Activated T-helper 1 cell treated with anti-CD3 and anti-CD28 coated beads, Interleukin-12 subunit alpha, Interleukin-12 subunit beta, Interleukin-2, Interleukin-4 antibody, amounts not matched to agents 30 ng/mL and 10 ng/mL and 1 ng/mL, durations not matched to agents 14 hours and 24 hours and 36 hours (primary cell): ENCODE measurements at regions of chr6 and their contacts with region 1.

Region 1: DNA sequence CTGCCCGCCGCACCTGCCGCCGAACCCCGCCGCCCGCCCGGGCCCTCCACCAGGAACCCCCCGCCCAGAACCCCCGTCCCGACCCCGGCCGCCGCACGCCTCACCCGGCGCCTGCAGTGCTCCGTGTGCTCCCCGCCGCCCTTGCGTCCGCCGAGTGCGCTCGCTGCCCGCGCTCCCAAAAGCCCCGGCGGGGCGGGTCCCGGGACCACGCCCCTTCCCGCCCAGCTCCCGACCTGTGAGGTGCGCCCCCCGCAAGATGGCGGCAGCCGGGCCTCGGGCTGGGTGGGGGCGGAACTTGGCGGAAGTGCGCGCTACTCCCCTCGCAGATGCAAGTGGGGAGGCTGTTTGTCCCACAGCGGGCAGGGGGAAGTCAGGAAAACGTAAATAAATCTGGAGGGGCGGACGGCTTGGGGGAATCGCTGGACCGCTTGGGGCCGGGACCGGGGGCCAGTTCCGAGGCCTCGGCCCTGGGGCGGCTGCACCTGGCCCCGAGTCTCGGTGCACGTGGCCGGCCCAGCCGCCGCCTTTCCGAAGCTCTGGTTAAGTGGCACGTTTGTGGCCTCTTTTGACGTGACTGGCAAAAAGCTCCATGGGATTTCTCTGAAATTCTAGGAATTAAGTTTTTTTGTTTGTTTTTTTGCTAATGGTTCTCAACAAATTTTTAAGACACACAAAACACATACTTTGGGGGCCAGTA is at the start of gene EZR:
- DNase-seq: peak; percentile 71
- H3K4me3 Mint-ChIP-seq: peak within 1 kb of the TSS; percentile 79
- H3K27ac Mint-ChIP-seq: peak within 1 kb of the TSS; percentile 86
- H3K4me1 Mint-ChIP-seq: peaks cover 55% of the 10 kb centered on the region
- H3K27me3 Mint-ChIP-seq: no peaks in the 10 kb centered on the region
- total RNA-seq, gene EZR: 205 and 206 TPM in 2 replicates

Region 2: GRCh38 chr6:158207422-158207788 is 612.0 kb before region 1 on chr6:
- intact Hi-C with region 1: loop called (anchors 1 kb)
- DNase-seq: peak; percentile 68
- H3K4me3 Mint-ChIP-seq: peak overlapping the region; percentile 56
- H3K27ac Mint-ChIP-seq: peak overlapping the region; percentile 96
- H3K4me1 Mint-ChIP-seq: peaks cover 63% of the 10 kb centered on the region
- H3K27me3 Mint-ChIP-seq: no peaks in the 10 kb centered on the region

Region 3: GRCh38 chr6:158595223-158595622 is 224.1 kb before region 1 on chr6:
- intact Hi-C with region 1: no loop called
- DNase-seq: no peak
- H3K4me3 Mint-ChIP-seq: no peak overlapping the region
- H3K27ac Mint-ChIP-seq: no peak overlapping the region
- H3K4me1 Mint-ChIP-seq: no peaks in the 10 kb centered on the region
- H3K27me3 Mint-ChIP-seq: no peaks in the 10 kb centered on the region

Region 4: GRCh38 chr6:158718461-158719046 is 100.8 kb before region 1 on chr6:
- intact Hi-C with region 1: loop called (anchors 5 kb)
- DNase-seq: no peak
- H3K4me3 Mint-ChIP-seq: no peak overlapping the region
- H3K27ac Mint-ChIP-seq: no peak overlapping the region
- H3K4me1 Mint-ChIP-seq: peaks cover 69% of the 10 kb centered on the region
- H3K27me3 Mint-ChIP-seq: peaks cover 2% of the 10 kb centered on the region

Region 5: DNA sequence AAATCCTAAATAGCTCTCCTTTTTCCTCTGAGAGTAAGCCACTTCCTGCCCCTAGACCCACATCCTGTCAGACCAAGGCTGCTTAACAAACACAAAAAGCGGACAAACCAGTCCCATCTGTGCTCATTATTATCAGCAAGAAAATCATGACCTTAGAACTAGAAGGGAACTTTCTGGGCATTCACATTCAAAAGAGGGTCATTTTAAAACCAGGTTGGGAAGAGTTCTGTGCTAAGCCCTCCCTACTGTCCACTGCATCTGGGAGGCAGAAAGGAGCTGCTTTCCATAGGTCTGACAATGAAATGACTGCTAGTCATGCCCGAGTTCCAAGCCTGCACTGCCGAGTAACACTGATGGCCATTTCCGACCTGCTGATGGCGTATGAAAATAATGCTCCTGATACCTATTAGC is 15.6 kb before region 1 on chr6:
- intact Hi-C with region 1: loop called (anchors 1 kb)
- DNase-seq: peak; percentile 38
- H3K4me3 Mint-ChIP-seq: peak overlapping the region; percentile 72
- H3K27ac Mint-ChIP-seq: peak overlapping the region; percentile 89
- H3K4me1 Mint-ChIP-seq: peaks cover 88% of the 10 kb centered on the region
- H3K27me3 Mint-ChIP-seq: no peaks in the 10 kb centered on the region

Region 6: DNA sequence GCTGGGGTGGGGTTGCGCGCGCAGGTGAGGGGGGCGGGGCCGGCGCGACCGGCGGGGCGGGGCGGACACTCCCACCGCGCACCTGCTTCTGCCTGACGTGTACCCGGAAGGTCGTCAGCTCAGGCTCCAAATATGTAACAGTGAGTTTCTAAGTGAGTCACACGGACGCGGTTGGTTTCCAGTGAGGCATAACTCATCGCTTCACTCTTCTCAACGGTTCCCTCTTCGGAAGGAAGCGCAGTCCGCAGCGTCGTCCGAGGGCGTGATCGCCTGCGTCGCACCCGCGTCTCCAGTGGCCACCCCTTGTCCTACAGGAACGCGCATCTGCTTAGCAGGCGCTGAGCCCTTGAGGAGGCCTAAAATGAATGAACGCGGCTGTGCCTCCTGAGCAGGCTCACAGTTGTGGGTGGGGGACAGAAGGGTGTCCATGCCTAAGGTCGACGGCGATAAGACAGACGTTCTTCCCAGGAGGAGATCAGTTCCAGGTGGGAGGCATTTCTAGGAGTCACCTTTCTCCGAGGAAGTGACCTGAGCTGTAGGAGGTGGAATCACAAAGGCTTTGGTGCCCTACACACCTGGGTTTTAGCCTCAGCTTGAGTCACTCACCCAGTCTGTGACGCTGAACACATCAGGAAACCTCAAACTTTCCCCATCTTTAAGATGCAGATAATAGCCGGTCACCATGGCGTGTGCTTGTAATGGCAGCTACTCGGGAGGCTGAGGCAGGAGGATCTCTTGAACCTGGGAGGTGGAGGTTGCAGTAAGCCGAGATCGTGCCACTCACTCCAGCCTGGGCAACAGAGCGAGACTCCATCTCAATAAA is 50.7 kb after region 1 on chr6:
- intact Hi-C with region 1: loop called (anchors 1 kb)
- DNase-seq: peak; percentile 94
- H3K4me3 Mint-ChIP-seq: peak overlapping the region; percentile 87
- H3K27ac Mint-ChIP-seq: peak overlapping the region; percentile 99
- H3K4me1 Mint-ChIP-seq: peaks cover 37% of the 10 kb centered on the region
- H3K27me3 Mint-ChIP-seq: peaks cover 5% of the 10 kb centered on the region

Region 7: DNA sequence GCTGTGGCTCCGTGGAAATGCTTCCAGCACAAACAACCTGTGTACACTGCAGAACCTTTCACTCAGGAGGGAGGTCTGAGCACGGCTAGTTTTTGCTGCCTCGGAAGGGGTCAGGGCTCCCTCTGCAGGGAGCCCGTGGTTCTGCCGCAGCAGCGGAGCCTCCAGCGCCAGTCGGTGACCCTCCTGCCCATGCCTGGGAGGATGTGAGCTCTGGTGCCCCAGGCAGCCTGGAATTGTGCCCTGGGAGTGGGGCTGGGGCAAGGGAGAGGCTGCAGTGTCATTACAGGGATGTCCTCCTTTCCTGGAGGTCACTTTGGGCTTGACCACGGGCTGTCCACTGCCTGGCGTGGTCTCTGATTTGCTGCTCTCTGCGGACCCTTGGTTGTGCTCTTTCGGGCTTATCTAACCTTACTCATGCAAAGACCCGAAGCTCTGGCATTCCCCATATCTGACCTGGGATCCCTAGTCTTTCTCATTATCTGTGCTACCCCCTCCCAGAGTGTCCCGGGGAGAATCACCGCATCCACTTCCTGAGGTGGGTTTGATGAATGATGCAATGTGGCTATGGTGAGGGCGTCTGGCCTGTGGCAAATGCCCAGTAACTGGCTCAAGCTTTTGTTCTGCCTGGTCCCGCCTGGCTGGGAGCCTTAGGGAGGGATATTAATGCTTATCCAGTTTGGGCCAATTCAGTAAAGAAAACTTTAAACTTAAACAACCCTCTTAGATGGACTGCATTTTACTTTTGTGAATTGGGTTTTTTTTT is 285.0 kb after region 1 on chr6:
- intact Hi-C with region 1: loop called (anchors 2 kb)
- DNase-seq: peak; percentile 69
- H3K4me3 Mint-ChIP-seq: peak overlapping the region; percentile 67
- H3K27ac Mint-ChIP-seq: peak overlapping the region; percentile 63
- H3K4me1 Mint-ChIP-seq: peaks cover 80% of the 10 kb centered on the region
- H3K27me3 Mint-ChIP-seq: no peaks in the 10 kb centered on the region